Common myeloid progenitor, CD34-positive (primary cell): ENCODE measurements at regions of chr22 and their contacts with region 1.

Region 1: GRCh38 chr22:44080936-44081861 is 57.1 kb downstream of the PARVB start:
- DNase-seq: peak; percentile 67 to 79 (median 73)
- H3K4me3 ChIP-seq: no peak overlapping the region
- H3K27ac ChIP-seq: no peak overlapping the region
- H3K4me1 ChIP-seq: no peaks in the 10 kb centered on the region
- H3K27me3 ChIP-seq: no peaks in the 10 kb centered on the region

Region 2: GRCh38 chr22:43976861-43977795 is 104.1 kb before region 1 on chr22:
- CTCF ChIA-PET with region 1: interaction called, 12 read pairs
- POLR2A ChIA-PET with region 1: no interaction called
- DNase-seq: no peak
- H3K4me3 ChIP-seq: no peak overlapping the region
- H3K27ac ChIP-seq: no peak overlapping the region
- H3K4me1 ChIP-seq: no peaks in the 10 kb centered on the region
- H3K27me3 ChIP-seq: no peaks in the 10 kb centered on the region

Region 3: GRCh38 chr22:44026630-44027511 is 54.3 kb before region 1 on chr22:
- CTCF ChIA-PET with region 1: interaction called, 11 read pairs
- POLR2A ChIA-PET with region 1: no interaction called
- DNase-seq: peak; percentile 85 to 94 (median 94)
- H3K4me3 ChIP-seq: peak overlapping the region in 6 of 7 experiments; percentile 29 to 75 (median 55)
- H3K27ac ChIP-seq: peak overlapping the region; percentile 85 to 91
- H3K4me1 ChIP-seq: peaks cover 4 to 77% (median 59%) of the 10 kb centered on the region in 4 experiments
- H3K27me3 ChIP-seq: no peaks in the 10 kb centered on the region

Region 4: DNA sequence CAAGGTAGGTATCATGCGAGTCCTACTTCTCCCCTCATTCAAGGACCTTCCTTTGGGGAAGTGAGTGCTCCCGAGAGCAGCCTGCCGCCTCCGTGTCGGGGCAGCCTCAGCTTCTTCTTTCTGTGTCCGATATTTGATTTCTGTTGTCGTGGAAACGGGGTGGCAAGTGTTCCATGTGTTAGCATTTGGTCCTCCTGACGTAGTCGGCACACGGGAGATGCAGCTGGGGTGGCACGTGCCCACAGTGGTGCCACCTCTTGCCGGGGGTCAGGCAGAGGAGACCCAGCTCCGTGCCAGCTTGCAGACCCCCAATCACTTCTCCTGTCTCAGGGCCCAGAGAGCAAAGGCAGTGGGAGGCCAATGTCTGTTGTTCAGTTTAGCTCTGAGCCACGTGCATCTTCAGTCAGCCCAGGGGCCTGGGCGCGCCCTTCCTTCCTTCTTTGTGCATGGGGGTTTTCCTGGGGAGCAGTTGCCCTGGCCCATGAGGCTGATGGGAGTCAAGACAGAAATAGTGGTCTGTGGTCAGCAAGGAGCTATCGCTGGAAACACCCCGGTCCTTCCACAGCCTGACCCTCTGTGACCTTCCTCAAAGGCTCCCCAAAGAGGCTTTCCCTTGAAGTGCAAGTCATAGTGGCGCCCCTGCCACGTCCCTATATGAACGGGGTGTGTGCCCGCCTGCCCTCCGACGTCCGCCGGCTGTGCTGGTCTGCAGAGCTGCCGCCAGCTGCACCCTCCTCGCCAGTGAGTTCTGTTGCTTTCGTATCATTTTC is 12.6 kb before region 1 on chr22:
- CTCF ChIA-PET with region 1: interaction called, 97 read pairs
- POLR2A ChIA-PET with region 1: interaction called, 3 read pairs
- DNase-seq: peak; percentile 89 to 99 (median 97)
- H3K4me3 ChIP-seq: peak overlapping the region in 3 of 7 experiments; percentile 22 to 54 (median 34)
- H3K27ac ChIP-seq: peak overlapping the region; percentile 80 to 91
- H3K4me1 ChIP-seq: peaks cover 0 to 41% (median 33%) of the 10 kb centered on the region in 4 experiments
- H3K27me3 ChIP-seq: no peaks in the 10 kb centered on the region

Region 5: GRCh38 chr22:44118645-44119315 is 37.6 kb after region 1 on chr22:
- CTCF ChIA-PET with region 1: no interaction called
- POLR2A ChIA-PET with region 1: no interaction called
- DNase-seq: no peak
- H3K4me3 ChIP-seq: no peak overlapping the region
- H3K27ac ChIP-seq: no peak overlapping the region
- H3K4me1 ChIP-seq: peaks cover 0 to 11% (median 6%) of the 10 kb centered on the region in 4 experiments
- H3K27me3 ChIP-seq: no peaks in the 10 kb centered on the region

Region 6: DNA sequence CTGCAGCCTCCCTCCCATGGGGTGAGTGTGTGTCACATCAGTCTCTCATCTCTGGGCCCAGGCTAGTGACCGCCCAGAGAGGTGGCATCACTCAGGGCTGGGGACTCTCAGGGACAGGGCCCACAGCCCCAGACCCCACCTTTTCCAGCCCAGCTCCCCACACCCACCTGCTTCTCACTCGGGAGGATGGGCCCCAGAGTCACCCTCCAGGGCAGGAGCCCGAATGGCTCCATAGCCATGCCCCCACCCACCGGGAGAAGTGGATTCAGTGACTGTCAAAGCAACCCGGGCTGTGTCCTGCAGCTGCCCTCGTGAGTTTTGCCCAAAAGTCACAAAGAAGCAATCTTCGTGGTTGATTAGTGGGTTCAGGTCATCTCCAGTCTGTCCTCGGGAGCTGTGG is 125.5 kb after region 1 on chr22:
- CTCF ChIA-PET with region 1: no interaction called
- POLR2A ChIA-PET with region 1: no interaction called
- DNase-seq: no peak
- H3K4me3 ChIP-seq: no peak overlapping the region
- H3K27ac ChIP-seq: no peak overlapping the region
- H3K4me1 ChIP-seq: peaks cover 0 to 3% (median 0%) of the 10 kb centered on the region in 4 experiments
- H3K27me3 ChIP-seq: no peaks in the 10 kb centered on the region

Region 7: DNA sequence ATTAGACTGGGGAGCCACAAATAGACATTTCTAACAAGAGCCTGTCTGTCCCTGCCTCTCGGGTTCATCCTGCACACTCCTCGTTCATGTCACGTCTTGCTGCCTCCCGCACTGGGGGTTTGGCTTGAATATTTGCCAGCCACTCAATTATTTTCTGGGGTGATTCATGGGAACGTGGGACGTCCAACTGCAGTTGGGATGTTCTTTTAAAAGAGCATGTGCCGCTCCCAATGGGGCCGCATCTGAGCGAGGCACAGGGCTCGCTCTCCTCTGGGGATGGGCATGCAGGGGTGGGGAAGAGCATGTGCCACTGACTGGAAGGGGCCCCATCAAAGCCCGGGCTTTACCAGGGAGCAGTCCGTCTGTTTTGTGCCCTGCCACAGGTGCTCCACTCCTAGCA is 143.0 kb after region 1 on chr22:
- CTCF ChIA-PET with region 1: no interaction called
- POLR2A ChIA-PET with region 1: no interaction called
- DNase-seq: no peak
- H3K4me3 ChIP-seq: no peak overlapping the region
- H3K27ac ChIP-seq: no peak overlapping the region
- H3K4me1 ChIP-seq: no peaks in the 10 kb centered on the region
- H3K27me3 ChIP-seq: peaks cover 0 to 9% (median 3%) of the 10 kb centered on the region in 5 experiments

Region 8: DNA sequence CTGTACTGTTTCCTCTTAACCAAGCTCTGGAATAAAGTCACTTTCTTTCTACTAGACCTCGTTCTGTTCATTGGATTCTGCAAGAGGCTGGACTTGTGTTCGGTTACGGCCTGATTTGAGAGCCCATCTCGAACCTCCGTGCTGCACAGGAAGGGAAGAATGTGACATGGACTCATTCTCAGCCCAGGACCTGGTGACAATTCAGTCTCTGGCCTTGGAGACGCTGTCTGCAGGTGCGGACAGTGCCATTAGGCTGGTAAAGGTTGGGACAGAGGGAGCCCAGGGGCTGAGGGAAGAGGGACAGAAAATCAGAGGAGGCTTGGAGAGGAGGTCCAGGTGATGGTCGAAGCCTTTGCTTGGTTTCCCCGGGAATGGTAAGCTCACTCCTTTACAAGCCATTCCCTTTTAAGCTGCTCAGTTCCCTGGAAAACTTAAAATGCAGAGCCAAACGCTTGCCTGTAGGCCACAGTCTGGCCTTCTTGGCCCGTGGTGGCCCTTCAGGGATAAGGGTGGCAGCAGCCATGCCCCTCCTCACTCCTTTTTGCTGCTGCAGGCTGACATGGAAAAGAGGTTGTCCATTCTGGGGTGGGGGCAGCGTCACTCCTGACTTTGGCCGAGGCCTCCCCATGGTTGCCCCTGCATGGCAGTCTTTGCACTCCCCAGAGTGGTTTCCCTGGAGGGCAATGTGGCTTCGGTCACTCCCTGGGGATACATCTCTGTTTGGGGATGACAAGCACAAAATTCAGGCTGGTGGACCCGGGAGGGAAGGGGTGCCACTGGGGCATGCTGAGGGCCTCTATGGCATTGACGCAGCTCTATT is 179.2 kb after region 1 on chr22:
- CTCF ChIA-PET with region 1: no interaction called
- POLR2A ChIA-PET with region 1: no interaction called
- DNase-seq: no peak
- H3K4me3 ChIP-seq: no peak overlapping the region
- H3K27ac ChIP-seq: no peak overlapping the region
- H3K4me1 ChIP-seq: peaks cover 0 to 2% (median 0%) of the 10 kb centered on the region in 4 experiments
- H3K27me3 ChIP-seq: peaks cover 0 to 22% (median 0%) of the 10 kb centered on the region in 5 experiments

Region 9: DNA sequence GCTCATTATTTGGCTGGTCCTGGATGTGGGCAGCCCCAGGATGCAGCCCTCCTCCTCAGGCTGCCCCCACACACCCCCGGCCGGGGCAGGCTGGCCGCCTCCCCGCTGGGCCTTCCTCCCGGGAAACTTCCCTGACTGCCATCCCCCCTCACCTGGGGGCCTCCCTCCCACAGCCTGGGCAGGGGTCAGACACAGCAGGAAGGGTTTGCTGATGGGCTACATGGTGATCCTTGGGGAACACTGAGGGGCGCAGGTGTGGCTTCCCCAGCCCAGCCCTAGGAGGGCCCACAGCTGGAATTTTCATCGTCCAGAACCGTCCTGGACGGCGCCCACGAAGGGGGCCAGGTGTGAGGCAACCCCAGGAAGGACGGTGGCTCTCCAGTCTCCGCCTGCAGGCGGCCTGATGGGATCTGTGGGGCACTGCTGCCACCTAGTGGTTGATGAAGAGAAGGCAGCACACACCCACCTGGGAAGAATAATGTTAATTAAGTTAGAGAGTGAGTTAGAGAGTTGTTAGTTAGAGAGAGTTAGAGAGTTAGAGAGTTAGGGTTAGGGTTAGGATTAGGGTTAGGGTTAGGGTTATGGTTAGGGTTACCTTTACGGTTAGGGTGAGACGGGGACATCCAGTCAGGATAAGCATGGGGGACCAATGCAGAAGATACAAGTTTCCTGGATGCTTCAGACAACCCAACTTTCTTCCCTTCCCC is 544.9 kb after region 1 on chr22:
- CTCF ChIA-PET with region 1: interaction called, 44 read pairs
- POLR2A ChIA-PET with region 1: no interaction called
- DNase-seq: peak; percentile 67 to 81 (median 76)
- H3K4me3 ChIP-seq: no peak overlapping the region
- H3K27ac ChIP-seq: no peak overlapping the region
- H3K4me1 ChIP-seq: peaks cover 0 to 5% (median 2%) of the 10 kb centered on the region in 4 experiments
- H3K27me3 ChIP-seq: no peaks in the 10 kb centered on the region